Activated B cell treated with CpG ODN at 0.5 μM for 24 hours (primary cell): ENCODE measurements at regions of chr18 and their contacts with region 1.

Region 1: GRCh38 chr18:13823707-13824395 is at the start of gene MC5R:
- DNase-seq: peak; percentile 60
- ATAC-seq: peak; percentile 98
- H3K4me3 Mint-ChIP-seq: peak within 1 kb of the TSS; percentile 61
- H3K27ac Mint-ChIP-seq: no peak within 1 kb of the TSS
- H3K4me1 Mint-ChIP-seq: peaks cover 2% of the 10 kb centered on the region
- H3K27me3 Mint-ChIP-seq: peaks cover 33% of the 10 kb centered on the region
- CTCF ChIP-seq: no peak
- total RNA-seq, gene MC5R: not detected in 2 replicates

Region 2: DNA sequence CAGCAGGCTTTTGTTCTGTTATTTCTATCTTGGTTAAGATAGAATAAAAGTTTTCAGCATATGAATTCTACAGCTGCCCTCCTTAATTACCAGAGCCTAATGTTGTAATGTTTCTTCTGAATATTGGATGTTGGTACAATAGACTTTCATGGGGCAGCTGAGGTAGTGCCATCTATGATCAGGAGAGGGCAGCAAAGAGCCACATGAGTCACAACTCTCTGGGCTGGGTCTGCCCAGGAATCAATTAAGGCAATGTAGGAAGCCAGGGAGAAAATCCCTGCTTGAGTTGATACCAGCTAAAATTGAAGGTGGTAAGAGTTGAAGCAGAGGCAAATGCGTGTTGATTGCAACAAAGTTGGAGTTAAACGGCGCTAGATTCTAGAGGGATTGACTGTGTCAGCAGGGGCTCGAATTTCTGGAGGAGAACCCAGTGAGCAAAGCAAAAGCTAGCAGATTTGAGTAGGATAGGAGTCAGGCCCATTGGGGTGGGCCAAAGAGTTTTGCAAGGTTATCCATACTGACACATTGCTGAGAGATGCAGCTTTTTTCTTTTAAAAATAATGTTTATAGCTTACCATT is 10.5 kb before region 1 on chr18:
- CTCF ChIA-PET with region 1: interaction called, 16 read pairs
- POLR2A ChIA-PET with region 1: no interaction called
- intact Hi-C with region 1: no loop called
- DNase-seq: no peak
- ATAC-seq: peak; percentile 81
- H3K4me3 Mint-ChIP-seq: no peak overlapping the region
- H3K27ac Mint-ChIP-seq: no peak overlapping the region
- H3K4me1 Mint-ChIP-seq: no peaks in the 10 kb centered on the region
- H3K27me3 Mint-ChIP-seq: peaks cover 2% of the 10 kb centered on the region
- CTCF ChIP-seq: peak; percentile 77

Region 3: GRCh38 chr18:14086458-14087231 is 262.8 kb after region 1 on chr18:
- CTCF ChIA-PET with region 1: interaction called, 6 read pairs
- POLR2A ChIA-PET with region 1: no interaction called
- intact Hi-C with region 1: loop called (anchors 1 kb)
- DNase-seq: no peak
- ATAC-seq: no peak
- H3K4me3 Mint-ChIP-seq: no peak overlapping the region
- H3K27ac Mint-ChIP-seq: no peak overlapping the region
- H3K4me1 Mint-ChIP-seq: no peaks in the 10 kb centered on the region
- H3K27me3 Mint-ChIP-seq: no peaks in the 10 kb centered on the region
- CTCF ChIP-seq: no peak